ENCODE measurements at regions of chr2 and their contacts with region 1.

Region 1: DNA sequence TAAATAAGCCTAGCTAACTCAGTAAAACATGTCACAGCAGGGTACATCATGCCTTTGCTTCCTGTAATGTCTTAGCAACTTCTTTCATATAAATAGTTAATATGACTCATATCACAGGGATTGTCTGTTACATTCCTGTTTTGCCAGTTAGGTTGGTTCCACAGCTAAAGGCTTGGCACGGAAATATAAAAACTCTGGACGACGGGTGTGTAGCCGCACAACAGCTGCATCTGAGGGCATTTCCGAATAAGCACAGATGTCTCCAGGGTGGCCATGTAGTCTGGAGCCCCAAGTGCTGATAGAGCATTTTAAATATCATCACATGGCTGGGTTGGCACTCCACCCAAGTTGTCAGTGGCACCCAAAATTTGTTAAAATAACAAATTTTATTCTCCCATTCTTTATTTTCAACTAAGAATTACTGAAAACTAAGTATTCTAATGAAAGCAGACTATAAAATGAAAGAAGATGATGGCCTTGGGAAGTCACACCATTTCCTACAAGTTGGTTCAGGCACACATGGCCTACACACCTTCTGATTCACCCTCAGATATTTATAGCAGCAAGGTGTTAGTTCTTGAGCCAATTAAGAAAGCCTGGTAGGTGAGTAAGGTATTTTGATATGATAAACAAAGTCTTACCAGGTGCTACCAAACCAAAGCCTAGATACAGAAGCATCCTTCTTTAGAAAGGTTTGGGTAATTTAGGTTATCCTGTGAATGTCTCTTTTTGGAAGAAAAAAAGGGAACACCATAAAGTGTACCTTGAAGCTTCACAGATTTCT is 61.8 kb upstream of the STK17B start:
- DNase-seq: no peak
- ATAC-seq: peak; percentile 45
- H3K4me3 Mint-ChIP-seq: peak overlapping the region; percentile 21
- H3K27ac Mint-ChIP-seq: peak overlapping the region; percentile 95
- H3K4me1 Mint-ChIP-seq: peaks cover 96% of the 10 kb centered on the region
- H3K27me3 Mint-ChIP-seq: no peaks in the 10 kb centered on the region

Region 2: GRCh38 chr2:196205881-196206435 is 27.3 kb before region 1 on chr2:
- CTCF ChIA-PET with region 1: interaction called, 4 read pairs
- POLR2A ChIA-PET with region 1: interaction called, 4 read pairs
- intact Hi-C with region 1: loop called (anchors 1 kb)
- DNase-seq: no peak
- ATAC-seq: no peak
- H3K4me3 Mint-ChIP-seq: no peak overlapping the region
- H3K27ac Mint-ChIP-seq: peak overlapping the region; percentile 35
- H3K4me1 Mint-ChIP-seq: peaks cover 45% of the 10 kb centered on the region
- H3K27me3 Mint-ChIP-seq: no peaks in the 10 kb centered on the region

Region 3: GRCh38 chr2:196220671-196221070 is 12.5 kb before region 1 on chr2:
- CTCF ChIA-PET with region 1: interaction called, 20 read pairs
- POLR2A ChIA-PET with region 1: interaction called, 3 read pairs
- intact Hi-C with region 1: no loop called
- DNase-seq: no peak
- ATAC-seq: peak; percentile 82
- H3K4me3 Mint-ChIP-seq: peak overlapping the region; percentile 17
- H3K27ac Mint-ChIP-seq: peak overlapping the region; percentile 23
- H3K4me1 Mint-ChIP-seq: peaks cover 76% of the 10 kb centered on the region
- H3K27me3 Mint-ChIP-seq: no peaks in the 10 kb centered on the region

Region 4: DNA sequence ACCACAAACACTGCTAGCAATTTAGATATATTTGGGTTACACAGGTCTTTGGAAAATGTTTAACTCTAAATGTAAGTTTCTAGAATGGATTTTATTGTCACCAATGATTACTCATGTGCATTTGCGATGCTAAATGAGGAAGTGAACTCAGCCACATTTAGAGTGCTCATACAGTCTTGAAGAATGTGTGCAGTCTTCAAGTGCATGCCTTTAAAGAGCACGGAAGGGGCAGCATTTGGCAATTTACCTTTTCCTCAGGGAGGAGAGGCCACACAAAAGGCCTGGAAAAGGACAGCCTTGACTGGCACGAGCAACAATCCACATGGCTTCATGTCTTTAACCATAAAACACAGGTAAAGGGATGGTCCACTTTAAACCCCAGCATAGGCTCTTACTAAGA is 16.6 kb after region 1 on chr2:
- CTCF ChIA-PET with region 1: interaction called, 7 read pairs
- POLR2A ChIA-PET with region 1: interaction called, 4 read pairs
- intact Hi-C with region 1: loop called in 1 of 2 experiments (anchors 1 kb)
- DNase-seq: no peak
- ATAC-seq: peak; percentile 24
- H3K4me3 Mint-ChIP-seq: no peak overlapping the region
- H3K27ac Mint-ChIP-seq: peak overlapping the region; percentile 72
- H3K4me1 Mint-ChIP-seq: peaks cover 88% of the 10 kb centered on the region
- H3K27me3 Mint-ChIP-seq: no peaks in the 10 kb centered on the region

Region 5: DNA sequence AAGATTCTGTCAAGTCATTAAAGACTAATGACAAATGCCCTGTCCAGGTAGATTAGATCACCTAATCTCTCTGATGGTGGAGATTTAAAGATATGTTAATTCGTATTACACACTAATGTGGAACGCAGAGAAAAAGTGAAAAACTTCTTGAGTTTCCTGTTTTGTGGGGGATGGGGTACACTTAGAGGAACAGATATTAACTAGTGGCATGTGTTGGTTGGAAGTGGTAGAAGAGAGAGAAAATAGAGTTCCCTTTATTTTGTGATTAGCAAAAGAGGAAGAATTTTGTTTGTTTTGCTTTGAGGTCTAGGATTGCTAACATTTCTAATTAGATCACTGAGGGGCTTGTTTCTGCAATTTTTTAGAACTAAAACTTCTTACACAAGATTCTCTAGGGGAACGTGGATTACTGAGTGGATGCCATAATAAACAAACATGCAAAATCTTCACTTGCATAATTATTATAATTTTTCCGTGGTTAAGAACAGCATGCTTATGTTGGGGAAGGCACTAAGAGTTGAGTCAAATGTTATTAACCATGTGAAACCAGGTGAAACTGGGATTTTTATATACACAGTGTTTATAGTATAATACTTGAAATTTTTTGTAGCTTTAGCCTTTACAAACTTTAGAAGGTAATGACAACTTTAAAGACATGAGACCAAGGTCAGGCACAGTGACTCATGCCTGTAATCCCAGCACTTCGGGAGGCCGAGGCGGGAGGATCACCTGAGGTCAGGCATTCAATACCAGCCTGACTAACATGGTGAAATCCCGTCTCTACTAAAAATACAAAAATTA is 35.5 kb after region 1 on chr2:
- CTCF ChIA-PET with region 1: interaction called, 3 read pairs
- POLR2A ChIA-PET with region 1: no interaction called
- intact Hi-C with region 1: loop called in 1 of 2 experiments (anchors 5 kb)
- DNase-seq: peak; percentile 46
- ATAC-seq: peak; percentile 37
- H3K4me3 Mint-ChIP-seq: peak overlapping the region; percentile 50
- H3K27ac Mint-ChIP-seq: peak overlapping the region; percentile 89
- H3K4me1 Mint-ChIP-seq: peaks cover 75% of the 10 kb centered on the region
- H3K27me3 Mint-ChIP-seq: no peaks in the 10 kb centered on the region

Region 6: GRCh38 chr2:196344397-196344796 is 111.2 kb after region 1 on chr2:
- CTCF ChIA-PET with region 1: no interaction called
- POLR2A ChIA-PET with region 1: no interaction called
- intact Hi-C with region 1: no loop called
- DNase-seq: no peak
- ATAC-seq: no peak
- H3K4me3 Mint-ChIP-seq: no peak overlapping the region
- H3K27ac Mint-ChIP-seq: no peak overlapping the region
- H3K4me1 Mint-ChIP-seq: no peaks in the 10 kb centered on the region
- H3K27me3 Mint-ChIP-seq: no peaks in the 10 kb centered on the region